ENCODE measurements at regions of chr12 and their contacts with region 1.

Region 1: GRCh38 chr12:52566847-52567291 is 6.8 kb downstream of the KRT74 start:
- DNase-seq: peak; percentile 86 to 92
- ATAC-seq: peak; percentile 89 to 94 (median 94)
- H3K4me3 ChIP-seq: no peak overlapping the region
- H3K4me3 Mint-ChIP-seq: peak overlapping the region; percentile 93
- H3K27ac ChIP-seq: peak overlapping the region; percentile 94
- H3K27ac Mint-ChIP-seq: peak overlapping the region; percentile 91 to 97
- H3K4me1 ChIP-seq: peaks cover 47% of the 10 kb centered on the region
- H3K4me1 Mint-ChIP-seq: peaks cover 46 to 54% of the 10 kb centered on the region in 2 donors
- H3K27me3 ChIP-seq: peaks cover 5% of the 10 kb centered on the region
- H3K27me3 Mint-ChIP-seq: peaks cover 0 to 14% of the 10 kb centered on the region in 2 donors
- CTCF ChIP-seq: no peak

Region 2: GRCh38 chr12:52351196-52352059 is 215.4 kb before region 1 on chr12:
- intact Hi-C with region 1: loop called (anchors 5 kb)
- DNase-seq: peak; percentile 73 to 84
- ATAC-seq: peak; percentile 86 to 99 (median 93)
- H3K4me3 ChIP-seq: no peak overlapping the region
- H3K4me3 Mint-ChIP-seq: peak overlapping the region; percentile 63
- H3K27ac ChIP-seq: no peak overlapping the region
- H3K27ac Mint-ChIP-seq: peak overlapping the region in 1 of 2 donors; percentile 56
- H3K4me1 ChIP-seq: peaks cover 25% of the 10 kb centered on the region
- H3K4me1 Mint-ChIP-seq: peaks cover 22 to 35% of the 10 kb centered on the region in 2 donors
- H3K27me3 ChIP-seq: peaks cover 53% of the 10 kb centered on the region
- H3K27me3 Mint-ChIP-seq: peaks cover 45 to 55% of the 10 kb centered on the region in 2 donors
- CTCF ChIP-seq: no peak

Region 3: GRCh38 chr12:52634266-52635056 is 67.6 kb after region 1 on chr12:
- intact Hi-C with region 1: loop called (anchors 1 kb)
- DNase-seq: no peak
- ATAC-seq: no peak
- H3K4me3 ChIP-seq: no peak overlapping the region
- H3K4me3 Mint-ChIP-seq: no peak overlapping the region
- H3K27ac ChIP-seq: no peak overlapping the region
- H3K27ac Mint-ChIP-seq: peak overlapping the region; percentile 18 to 67
- H3K4me1 ChIP-seq: peaks cover 45% of the 10 kb centered on the region
- H3K4me1 Mint-ChIP-seq: peaks cover 74% of the 10 kb centered on the region in 2 donors
- H3K27me3 ChIP-seq: no peaks in the 10 kb centered on the region
- H3K27me3 Mint-ChIP-seq: no peaks in the 10 kb centered on the region
- CTCF ChIP-seq: no peak

Region 4: GRCh38 chr12:52870351-52871290 is 303.8 kb after region 1 on chr12:
- intact Hi-C with region 1: loop called (anchors 5 kb)
- DNase-seq: peak; percentile 81 to 88
- ATAC-seq: peak; percentile 53 to 77 (median 67)
- H3K4me3 ChIP-seq: no peak overlapping the region
- H3K4me3 Mint-ChIP-seq: no peak overlapping the region
- H3K27ac ChIP-seq: peak overlapping the region; percentile 53
- H3K27ac Mint-ChIP-seq: peak overlapping the region in 1 of 2 donors; percentile 92
- H3K4me1 ChIP-seq: peaks cover 44% of the 10 kb centered on the region
- H3K4me1 Mint-ChIP-seq: peaks cover 27 to 76% of the 10 kb centered on the region in 2 donors
- H3K27me3 ChIP-seq: peaks cover 5% of the 10 kb centered on the region
- H3K27me3 Mint-ChIP-seq: peaks cover 0 to 17% of the 10 kb centered on the region in 2 donors
- CTCF ChIP-seq: peak; percentile 88